Heart right ventricle (tissue), 16 donors: ENCODE measurements at regions of chr1 and their contacts with region 1.

Region 1: DNA sequence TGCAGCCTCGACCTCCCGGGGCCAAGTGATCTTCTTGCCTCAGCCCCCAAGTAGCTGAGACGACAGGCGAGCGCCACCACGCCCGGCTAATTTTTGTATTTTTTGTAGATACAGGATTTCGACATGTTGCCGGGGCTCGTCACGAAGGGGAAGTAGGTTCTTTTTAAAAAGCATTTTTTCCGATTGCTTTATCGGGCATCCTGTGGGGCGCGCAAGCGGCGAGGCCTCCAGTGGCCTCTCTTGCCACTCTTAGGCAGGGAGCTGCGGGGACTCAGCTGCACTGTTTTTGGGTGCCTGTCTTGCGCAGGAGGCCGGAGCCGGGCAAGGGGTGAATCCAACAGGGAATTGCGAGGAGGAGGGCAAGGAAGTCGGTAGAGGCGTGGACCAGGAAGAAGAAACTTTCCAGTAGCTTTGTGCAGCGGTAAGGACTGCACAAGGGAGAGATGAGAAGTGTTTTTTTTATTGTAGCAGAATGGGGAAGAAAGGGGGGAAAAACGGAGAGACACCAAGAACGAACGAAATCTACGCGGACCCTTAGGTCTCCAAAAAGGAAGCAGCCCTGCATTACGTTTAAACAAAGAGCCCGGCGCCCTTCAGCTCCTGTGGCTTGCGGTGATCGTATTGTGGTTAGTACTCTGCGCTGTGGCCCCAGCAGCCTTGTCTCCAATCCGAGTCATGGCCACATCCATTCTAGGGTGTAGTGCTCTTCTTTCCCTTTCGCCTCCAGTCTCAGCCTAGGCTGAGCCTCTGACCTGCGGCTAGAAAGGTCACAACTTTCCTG is 164.8 kb downstream of the PPIAL4G start:
- DNase-seq: peak in 1 of 2 donors; percentile 23
- ATAC-seq: peak in 6 of 8 donors; percentile 46 to 76 (median 50)
- H3K4me3 ChIP-seq: peak overlapping the region in 9 of 10 donors; percentile 1 to 51 (median 34)
- H3K27ac ChIP-seq: peak overlapping the region in 1 of 10 donors; percentile 81
- H3K4me1 ChIP-seq: peaks cover 0 to 26% (median 12%) of the 10 kb centered on the region in 9 donors
- H3K27me3 ChIP-seq: peaks cover 4 to 79% (median 60%) of the 10 kb centered on the region in 7 donors
- CTCF ChIP-seq: no peak

Region 2: DNA sequence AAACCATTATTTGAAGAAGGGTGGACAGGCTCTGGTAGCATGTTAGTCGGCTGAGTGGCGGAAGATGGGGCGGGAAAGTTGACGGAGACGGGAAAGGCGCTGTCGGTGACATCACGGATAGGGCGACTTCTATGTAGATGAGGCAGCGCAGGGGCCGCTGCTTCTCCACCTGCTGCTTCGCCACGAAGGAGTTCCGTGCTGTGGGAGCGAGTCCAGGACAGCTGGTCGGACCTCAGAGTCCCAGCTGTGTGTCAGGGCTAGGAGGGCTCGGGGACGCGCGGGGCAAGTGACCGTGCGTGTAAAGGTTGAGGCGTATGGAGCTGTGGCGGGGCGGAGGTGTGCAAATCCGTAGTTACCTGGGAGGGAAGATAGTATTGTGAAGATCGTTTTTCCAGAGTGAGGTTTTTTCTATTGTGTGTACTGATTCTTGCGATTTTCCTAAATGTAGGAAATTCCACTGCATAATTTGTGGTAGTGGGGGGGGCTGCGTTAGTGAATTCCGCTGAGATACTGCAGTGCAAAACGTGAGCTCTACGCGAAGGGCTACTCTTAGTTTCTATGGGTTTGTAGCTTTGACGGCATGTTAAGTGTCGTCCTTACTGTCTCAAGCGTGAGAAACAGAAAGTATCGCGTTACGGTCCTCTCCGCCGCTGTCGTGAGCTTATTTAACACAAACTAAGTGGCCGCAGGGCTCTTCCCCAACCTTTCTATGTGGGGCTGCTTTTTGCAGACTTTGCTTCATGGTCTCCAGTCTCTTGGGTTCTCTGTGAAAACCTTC is 55.0 kb before region 1 on chr1:
- intact Hi-C with region 1: loop called in 1 of 10 experiments (anchors 10 kb)
- DNase-seq: peak; percentile 29 to 43
- ATAC-seq: peak; percentile 61 to 90 (median 72)
- H3K4me3 ChIP-seq: peak overlapping the region; percentile 16 to 61 (median 52)
- H3K27ac ChIP-seq: peak overlapping the region in 2 of 10 donors; percentile 12 to 42
- H3K4me1 ChIP-seq: peaks cover 0 to 17% (median 6%) of the 10 kb centered on the region in 9 donors
- H3K27me3 ChIP-seq: peaks cover 0 to 50% (median 0%) of the 10 kb centered on the region in 7 donors
- CTCF ChIP-seq: no peak